ENCODE measurements at regions of chr3 and their contacts with region 1.

Region 1: GRCh38 chr3:123652346-123652984 is 67.6 kb upstream of the HACD2 start:
- DNase-seq: peak; percentile 63 to 97 (median 84)

Region 2: DNA sequence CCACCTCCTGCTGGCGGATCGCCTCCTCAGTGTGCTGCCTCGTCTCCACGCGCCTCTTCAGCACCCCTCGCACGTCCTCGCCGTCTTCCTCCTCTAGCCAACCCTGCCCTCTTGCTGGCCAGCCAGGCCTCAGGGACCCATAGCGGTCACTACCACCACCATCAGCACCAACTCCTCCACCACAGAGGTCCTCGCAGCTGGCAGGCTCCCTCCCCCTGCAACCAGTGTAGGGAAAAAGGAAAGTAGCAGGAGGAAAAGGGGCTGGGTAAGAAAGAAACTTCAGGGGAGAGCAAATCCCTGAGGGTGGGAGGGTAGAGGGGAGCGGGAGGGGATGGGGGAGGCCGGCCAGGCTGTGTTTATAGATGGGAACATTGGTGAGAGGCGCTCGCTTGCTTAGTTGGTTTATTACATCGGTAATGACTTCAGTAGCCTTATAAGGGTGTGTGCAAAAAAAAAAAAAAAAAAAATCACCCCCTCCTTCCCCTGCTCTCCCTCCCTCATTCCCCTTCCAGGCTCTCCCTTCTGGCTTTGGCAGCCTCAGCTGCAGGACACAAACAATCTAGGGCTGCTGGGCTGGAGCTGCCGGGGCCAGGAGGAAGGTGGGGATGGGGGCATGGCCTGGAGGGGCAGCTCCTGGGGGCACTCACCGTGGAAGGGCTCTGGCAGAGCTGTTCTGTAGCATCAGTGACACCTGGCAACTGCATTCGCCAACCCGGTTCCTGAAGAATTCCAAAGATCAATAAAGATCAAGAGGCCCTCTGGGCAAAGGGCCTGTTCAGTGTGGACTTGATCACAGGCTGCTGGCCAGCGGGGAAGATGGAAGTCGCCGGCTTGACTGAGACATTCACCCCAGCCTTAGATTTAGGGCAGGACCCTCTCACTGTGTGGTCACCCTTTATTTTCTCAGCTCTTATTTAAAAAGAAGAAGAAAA is 48.6 kb after region 1 on chr3:
- intact Hi-C with region 1: loop called (anchors 5 kb)
- DNase-seq: peak in 1 of 10 donors; percentile 81

Region 3: DNA sequence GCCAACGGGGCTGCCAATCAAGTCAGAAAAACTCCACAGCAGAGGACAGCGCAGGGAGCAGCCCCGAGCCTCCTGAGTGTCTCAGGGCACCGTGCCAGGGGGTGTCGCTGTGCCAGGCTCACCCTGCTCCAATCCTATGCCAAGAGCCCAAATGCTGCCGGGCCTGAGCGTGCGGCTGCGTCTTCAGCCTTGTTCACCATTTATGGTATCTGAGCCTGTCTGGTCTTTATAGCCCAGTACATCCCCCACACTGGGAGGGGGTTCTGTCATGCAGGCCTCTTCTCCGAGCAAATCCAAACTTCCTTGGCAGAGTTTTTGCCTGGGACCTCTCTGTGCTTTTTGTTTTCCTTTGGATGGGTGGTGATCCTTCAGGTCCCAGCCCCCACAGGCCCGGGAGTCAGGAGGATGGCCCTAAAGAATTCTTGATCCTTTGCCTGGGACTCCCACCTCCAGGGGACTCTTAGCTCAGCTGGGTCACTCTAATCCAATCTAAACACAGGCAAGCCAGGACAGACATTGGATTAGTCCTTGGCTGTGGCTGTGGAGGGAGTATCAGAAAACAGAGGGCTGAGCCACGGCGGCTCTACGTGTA is 67.5 kb after region 1 on chr3:
- intact Hi-C with region 1: loop called (anchors 1 kb)
- DNase-seq: peak in 2 of 10 donors; percentile 53 to 77

Region 4: GRCh38 chr3:123984957-123985356 is 332.5 kb after region 1 on chr3:
- intact Hi-C with region 1: loop called (anchors 5 kb)
- DNase-seq: no peak